ENCODE measurements at regions of chr16 and their contacts with region 1.

Region 1: DNA sequence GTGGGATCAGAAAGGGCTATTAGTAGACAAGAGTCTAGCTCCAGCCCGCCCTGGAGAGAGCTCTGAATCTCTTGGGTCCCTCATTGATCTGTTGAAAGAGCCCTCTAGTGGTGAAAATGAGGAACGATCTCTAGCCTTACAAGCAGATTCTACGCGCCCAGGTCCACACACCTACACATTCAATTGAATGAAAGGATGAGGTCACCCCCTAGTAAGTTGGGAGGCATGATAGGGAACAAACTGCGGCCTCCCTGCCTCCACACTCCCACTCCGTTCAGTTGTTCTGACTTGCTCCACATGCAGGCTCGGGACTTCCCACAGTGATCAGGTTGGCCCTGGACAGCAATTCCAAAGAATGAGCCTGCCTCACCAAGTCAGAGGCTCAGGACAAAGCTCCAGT is 2.9 kb upstream of the CACNG3 start:
- DNase-seq: peak; percentile 12
- H3K4me3 Mint-ChIP-seq: no peak overlapping the region
- H3K27ac Mint-ChIP-seq: no peak overlapping the region
- H3K4me1 Mint-ChIP-seq: peaks cover 4% of the 10 kb centered on the region
- H3K27me3 Mint-ChIP-seq: peaks cover 40% of the 10 kb centered on the region

Region 2: GRCh38 chr16:24041826-24042631 is 211.2 kb before region 1 on chr16:
- intact Hi-C with region 1: loop called (anchors 1 kb)
- DNase-seq: peak; percentile 67
- H3K4me3 Mint-ChIP-seq: no peak overlapping the region
- H3K27ac Mint-ChIP-seq: no peak overlapping the region
- H3K4me1 Mint-ChIP-seq: peaks cover 7% of the 10 kb centered on the region
- H3K27me3 Mint-ChIP-seq: no peaks in the 10 kb centered on the region

Region 3: GRCh38 chr16:24070851-24071250 is 182.3 kb before region 1 on chr16:
- intact Hi-C with region 1: loop called (anchors 1 kb)
- DNase-seq: no peak
- H3K4me3 Mint-ChIP-seq: no peak overlapping the region
- H3K27ac Mint-ChIP-seq: no peak overlapping the region
- H3K4me1 Mint-ChIP-seq: peaks cover 20% of the 10 kb centered on the region
- H3K27me3 Mint-ChIP-seq: no peaks in the 10 kb centered on the region

Region 4: GRCh38 chr16:24139282-24139681 is 113.9 kb before region 1 on chr16:
- intact Hi-C with region 1: loop called (anchors 10 kb)
- DNase-seq: no peak
- H3K4me3 Mint-ChIP-seq: no peak overlapping the region
- H3K27ac Mint-ChIP-seq: peak overlapping the region; percentile 40
- H3K4me1 Mint-ChIP-seq: peaks cover 18% of the 10 kb centered on the region
- H3K27me3 Mint-ChIP-seq: no peaks in the 10 kb centered on the region

Region 5: GRCh38 chr16:24689145-24689544 is 436.0 kb after region 1 on chr16:
- intact Hi-C with region 1: no loop called
- DNase-seq: no peak
- H3K4me3 Mint-ChIP-seq: no peak overlapping the region
- H3K27ac Mint-ChIP-seq: no peak overlapping the region
- H3K4me1 Mint-ChIP-seq: no peaks in the 10 kb centered on the region
- H3K27me3 Mint-ChIP-seq: no peaks in the 10 kb centered on the region